H1 (cell line): ENCODE measurements at regions of chr12 and their contacts with region 1.

Region 1: DNA sequence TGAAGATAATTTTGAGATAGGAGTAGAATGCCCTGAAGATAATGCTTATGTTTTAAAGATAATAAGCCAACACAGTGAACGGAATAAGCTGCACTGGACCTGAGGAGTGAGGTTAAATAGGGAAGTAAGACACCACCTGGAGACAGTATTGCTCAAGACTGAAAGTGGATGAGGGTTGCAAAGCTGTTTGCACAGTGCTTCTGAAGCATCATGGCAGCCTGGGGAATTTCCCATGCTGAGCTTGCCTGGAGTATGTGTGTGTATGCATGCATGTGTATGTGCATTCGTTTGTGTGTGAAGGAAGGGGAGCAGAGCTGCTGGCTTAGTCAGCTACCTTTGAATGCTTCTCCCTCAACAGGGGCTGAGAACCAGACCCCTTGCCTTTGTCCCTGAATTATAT is 35.8 kb downstream of the BHLHE41 start:
- DNase-seq: no peak
- H3K4me3 ChIP-seq: no peak overlapping the region
- H3K27ac ChIP-seq: no peak overlapping the region
- H3K4me1 ChIP-seq: no peaks in the 10 kb centered on the region
- H3K27me3 ChIP-seq: no peaks in the 10 kb centered on the region
- CTCF ChIP-seq: no peak
- EP300 ChIP-seq: no peak
- POLR2A ChIP-seq: no peak
- RAD21 ChIP-seq: no peak

Region 2: GRCh38 chr12:25935355-25936144 is 153.4 kb before region 1 on chr12:
- CTCF ChIA-PET with region 1: no interaction called
- POLR2A ChIA-PET with region 1: no interaction called
- DNase-seq: no peak
- H3K4me3 ChIP-seq: no peak overlapping the region
- H3K27ac ChIP-seq: no peak overlapping the region
- H3K4me1 ChIP-seq: no peaks in the 10 kb centered on the region
- H3K27me3 ChIP-seq: no peaks in the 10 kb centered on the region
- CTCF ChIP-seq: no peak
- EP300 ChIP-seq: no peak
- POLR2A ChIP-seq: no peak
- RAD21 ChIP-seq: no peak

Region 3: DNA sequence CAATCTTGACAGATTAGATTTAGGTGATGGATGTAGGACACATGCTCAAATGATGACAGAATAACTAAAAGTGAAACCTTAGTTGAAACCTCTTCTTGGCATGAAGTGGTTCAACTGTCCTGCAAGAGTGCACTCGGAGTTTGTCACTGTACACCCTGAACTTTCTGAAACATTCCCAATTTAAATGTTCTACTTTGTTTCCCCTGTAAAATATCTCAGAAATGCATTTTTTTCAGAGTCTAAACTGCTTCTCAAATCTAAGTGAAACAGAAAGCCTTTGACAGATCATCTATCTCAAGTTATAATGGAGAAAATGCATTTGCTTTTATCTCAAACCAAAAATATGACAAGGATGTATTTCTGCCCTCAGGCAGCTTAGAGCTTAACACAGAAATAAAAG is 30.2 kb before region 1 on chr12:
- CTCF ChIA-PET with region 1: interaction called, 10 read pairs
- POLR2A ChIA-PET with region 1: no interaction called
- DNase-seq: no peak
- H3K4me3 ChIP-seq: no peak overlapping the region
- H3K27ac ChIP-seq: no peak overlapping the region
- H3K4me1 ChIP-seq: peaks cover 0 to 2% (median 0%) of the 10 kb centered on the region in 4 experiments; a peak in 1 of 7 replicates
- H3K27me3 ChIP-seq: no peaks in the 10 kb centered on the region
- CTCF ChIP-seq: no peak
- EP300 ChIP-seq: no peak
- POLR2A ChIP-seq: no peak
- RAD21 ChIP-seq: no peak

Region 4: GRCh38 chr12:26101350-26101734 is 12.3 kb after region 1 on chr12:
- CTCF ChIA-PET with region 1: interaction called, 22 read pairs
- POLR2A ChIA-PET with region 1: no interaction called
- DNase-seq: no peak
- H3K4me3 ChIP-seq: no peak overlapping the region
- H3K27ac ChIP-seq: no peak overlapping the region
- H3K4me1 ChIP-seq: no peaks in the 10 kb centered on the region
- H3K27me3 ChIP-seq: no peaks in the 10 kb centered on the region
- CTCF ChIP-seq: no peak
- EP300 ChIP-seq: no peak
- POLR2A ChIP-seq: no peak
- RAD21 ChIP-seq: no peak